ENCODE measurements at regions of chr11 and their contacts with region 1.

Region 1: DNA sequence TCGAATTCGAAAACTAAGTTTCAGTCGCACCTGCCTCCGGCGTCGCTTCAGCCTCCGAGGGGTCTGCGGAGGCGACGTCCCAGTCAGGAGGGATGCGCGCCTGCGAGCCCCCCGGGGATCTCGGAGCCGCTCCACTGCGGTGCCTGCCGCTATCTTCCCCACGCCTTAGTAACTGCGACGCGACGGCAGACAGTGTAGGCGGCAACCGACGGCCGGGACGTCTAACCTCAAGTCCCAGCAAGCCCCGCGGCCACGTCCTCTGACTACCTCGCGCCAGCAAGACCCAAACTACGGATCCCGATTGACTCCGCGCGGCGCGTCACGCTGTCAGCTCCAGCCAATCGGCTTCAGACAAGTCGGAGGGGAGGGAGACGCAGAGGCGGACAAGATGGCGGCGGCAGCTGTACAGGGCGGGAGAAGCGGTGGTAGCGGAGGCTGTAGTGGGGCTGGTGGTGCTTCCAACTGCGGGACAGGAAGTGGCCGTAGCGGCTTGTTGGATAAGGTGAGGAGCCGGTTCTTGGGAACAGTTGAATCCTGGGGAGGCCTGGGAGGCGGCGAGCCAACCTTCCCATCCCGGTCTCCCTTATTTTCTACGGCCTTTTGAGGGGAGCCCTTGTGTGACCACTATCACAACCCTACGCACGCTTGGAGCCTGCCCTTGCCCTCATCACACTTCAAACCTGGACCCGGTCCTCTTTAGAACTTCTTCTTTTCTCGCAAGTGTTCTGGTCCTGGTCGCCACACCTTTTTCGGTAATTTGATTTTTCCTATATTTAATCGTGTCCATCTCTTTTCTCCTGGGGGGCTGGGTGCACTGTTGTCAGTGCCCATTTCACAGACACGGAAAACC is at the starts of genes SPCS2 and XRRA1:
- DNase-seq: peak; percentile 99 to 100 (median 99)
- ATAC-seq: peak; percentile 99 to 100 (median 99)
- H3K4me3 ChIP-seq: peak within 1 kb of the TSS; percentile 72 to 96 (median 84)
- H3K27ac ChIP-seq: peak within 1 kb of the TSS; percentile 5 to 91 (median 88)
- H3K4me1 ChIP-seq: peaks cover 0 to 56% (median 34%) of the 10 kb centered on the region in 12 donors
- H3K27me3 ChIP-seq: no peaks in the 10 kb centered on the region
- CTCF ChIP-seq: no peak
- POLR2A ChIP-seq: peak; percentile 61 to 78
- total RNA-seq, gene SPCS2: 21.8 to 136 (median 109) TPM
- total RNA-seq, gene XRRA1: 5.3 to 26.6 (median 13.4) TPM

Region 2: GRCh38 chr11:74532501-74533246 is 416.4 kb before region 1 on chr11:
- intact Hi-C with region 1: no loop called
- DNase-seq: no peak
- ATAC-seq: no peak
- H3K4me3 ChIP-seq: no peak overlapping the region
- H3K27ac ChIP-seq: no peak overlapping the region
- H3K4me1 ChIP-seq: peaks cover 0 to 10% (median 0%) of the 10 kb centered on the region in 12 donors
- H3K27me3 ChIP-seq: no peaks in the 10 kb centered on the region
- CTCF ChIP-seq: no peak
- POLR2A ChIP-seq: no peak

Region 3: DNA sequence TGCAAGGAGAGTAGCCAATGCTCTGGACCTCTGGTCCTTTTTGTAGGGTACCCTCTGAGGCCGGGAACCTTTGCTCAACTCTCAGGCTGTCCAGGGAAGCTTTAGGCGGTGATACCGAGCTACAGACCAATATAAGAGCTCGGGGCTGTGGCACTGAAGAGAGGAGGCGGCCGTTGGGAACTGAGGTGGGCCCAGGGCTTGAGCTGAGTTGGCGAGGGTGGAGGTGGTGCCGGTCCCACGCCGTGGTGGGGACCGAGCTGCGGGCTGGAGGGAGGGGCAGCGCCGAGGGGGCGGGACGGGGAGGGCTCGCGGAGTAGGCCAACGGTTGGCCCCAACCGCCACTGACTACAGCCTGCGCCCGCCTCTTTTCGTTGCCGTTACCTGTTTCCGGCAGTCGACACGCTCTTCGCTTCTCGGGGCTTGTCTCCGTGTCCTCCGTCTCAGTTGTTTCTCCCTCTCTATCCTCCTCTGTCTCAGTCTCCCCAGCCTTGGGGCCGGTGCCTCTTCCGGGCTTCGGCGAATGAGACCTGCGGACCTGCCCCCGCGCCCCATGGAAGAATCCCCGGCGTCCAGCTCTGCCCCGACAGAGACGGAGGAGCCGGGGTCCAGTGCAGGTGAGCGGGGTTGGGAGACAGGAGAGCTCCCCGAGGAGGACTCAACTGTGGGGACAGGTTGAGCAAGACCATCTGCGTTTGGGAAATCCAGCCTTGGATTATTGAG is 39.6 kb after region 1 on chr11 and contains the start of gene NEU3:
- intact Hi-C with region 1: loop called in 2 of 10 experiments (anchors 5 kb)
- DNase-seq: peak; percentile 81 to 89 (median 82)
- ATAC-seq: peak; percentile 89 to 97 (median 97)
- H3K4me3 ChIP-seq: peak within 1 kb of the TSS; percentile 41 to 95 (median 81)
- H3K27ac ChIP-seq: peak within 1 kb of the TSS in 11 of 12 donors; percentile 1 to 86 (median 75)
- H3K4me1 ChIP-seq: peaks cover 0 to 32% (median 10%) of the 10 kb centered on the region in 12 donors
- H3K27me3 ChIP-seq: no peaks in the 10 kb centered on the region
- CTCF ChIP-seq: no peak
- POLR2A ChIP-seq: peak in 1 of 2 donors; percentile 22
- total RNA-seq, gene NEU3: 5.1 to 16.6 (median 7.7) TPM

Region 4: GRCh38 chr11:75014129-75014528 is 65.0 kb after region 1 on chr11:
- intact Hi-C with region 1: no loop called
- DNase-seq: peak in 3 of 5 donors; percentile 26 to 47 (median 36)
- ATAC-seq: peak; percentile 83 to 92 (median 86)
- H3K4me3 ChIP-seq: no peak overlapping the region
- H3K27ac ChIP-seq: peak overlapping the region in 8 of 12 donors; percentile 10 to 82 (median 40)
- H3K4me1 ChIP-seq: peaks cover 0 to 16% (median 4%) of the 10 kb centered on the region in 12 donors
- H3K27me3 ChIP-seq: no peaks in the 10 kb centered on the region
- CTCF ChIP-seq: no peak
- POLR2A ChIP-seq: no peak

Measured in heart left ventricle (tissue), 16 donors.